Stomach (tissue), 19 donors: ENCODE measurements at regions of chr20 and their contacts with region 1.

Region 1: GRCh38 chr20:62302341-62303058 is at the start of gene ADRM1:
- DNase-seq: peak; percentile 97 to 99
- H3K4me3 ChIP-seq: peak within 1 kb of the TSS; percentile 78 to 92 (median 82)
- H3K27ac ChIP-seq: peak within 1 kb of the TSS; percentile 96 to 99 (median 97)
- H3K4me1 ChIP-seq: peaks cover 26 to 53% (median 40%) of the 10 kb centered on the region in 4 donors
- H3K27me3 ChIP-seq: no peaks in the 10 kb centered on the region
- CTCF ChIP-seq: peak in 6 of 7 experiments; percentile 82 to 98 (median 96)
- EP300 ChIP-seq: no peak
- POLR2A ChIP-seq: no peak
- total RNA-seq, gene ADRM1: 42.0 to 130 (median 68.4) TPM

Region 2: DNA sequence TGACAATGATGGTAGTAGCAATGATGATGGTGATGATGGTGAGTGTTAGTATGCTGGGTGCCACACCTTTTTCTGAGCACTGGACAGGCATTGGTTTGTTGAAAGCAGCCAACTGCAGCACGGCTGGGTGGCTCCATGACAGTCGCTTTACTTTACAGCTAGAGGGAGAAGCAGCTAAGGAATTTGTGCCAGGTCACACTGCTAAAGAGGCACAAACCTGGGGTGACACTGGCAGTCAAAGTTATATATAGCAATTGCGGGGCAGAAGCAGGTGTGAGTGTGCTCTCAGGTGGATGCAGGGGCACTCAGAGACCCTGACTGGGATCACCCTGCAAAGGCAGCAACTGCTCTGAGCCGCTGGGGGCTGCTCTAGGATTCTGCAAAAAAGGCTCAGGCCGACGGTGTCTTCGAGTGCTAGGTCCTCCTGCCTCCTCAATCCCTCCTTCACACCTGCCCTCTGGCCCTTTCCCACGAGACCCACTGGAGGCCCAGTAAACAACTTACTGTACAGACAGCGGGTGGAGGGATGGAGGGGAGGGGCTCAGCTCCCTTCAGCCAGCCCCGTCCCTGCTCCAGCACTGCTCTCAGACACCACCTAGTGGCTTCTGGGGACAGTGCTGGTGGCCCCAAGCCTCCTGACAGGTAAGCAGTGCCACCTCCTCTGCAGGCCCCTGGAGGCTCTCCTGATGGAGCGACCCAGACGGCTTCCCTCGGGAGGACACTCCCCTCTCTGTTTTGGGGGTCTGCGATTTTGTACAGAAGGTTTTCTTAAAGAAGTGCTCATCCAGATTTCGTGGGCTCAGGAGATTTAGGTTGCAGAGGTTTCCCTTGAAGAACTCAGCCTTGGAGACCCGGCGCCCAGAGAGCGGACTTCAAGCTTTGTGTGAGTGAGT is 80.1 kb after region 1 on chr20:
- intact Hi-C with region 1: loop called (anchors 5 kb)
- DNase-seq: peak; percentile 89 to 93
- H3K4me3 ChIP-seq: no peak overlapping the region
- H3K27ac ChIP-seq: peak overlapping the region in 3 of 5 donors; percentile 19 to 76 (median 20)
- H3K4me1 ChIP-seq: peaks cover 31 to 55% (median 43%) of the 10 kb centered on the region in 4 donors
- H3K27me3 ChIP-seq: no peaks in the 10 kb centered on the region
- CTCF ChIP-seq: peak in 5 of 7 experiments; percentile 84 to 94 (median 90)
- EP300 ChIP-seq: no peak
- POLR2A ChIP-seq: no peak

Region 3: GRCh38 chr20:62623488-62624324 is 321.2 kb after region 1 on chr20:
- intact Hi-C with region 1: no loop called
- DNase-seq: peak; percentile 96 to 99
- H3K4me3 ChIP-seq: peak overlapping the region in 2 of 4 donors; percentile 1 to 18
- H3K27ac ChIP-seq: peak overlapping the region; percentile 90 to 98 (median 94)
- H3K4me1 ChIP-seq: peaks cover 26 to 63% (median 48%) of the 10 kb centered on the region in 4 donors
- H3K27me3 ChIP-seq: peaks cover 0 to 4% (median 0%) of the 10 kb centered on the region in 3 donors
- CTCF ChIP-seq: peak in 1 of 7 experiments; percentile 9
- EP300 ChIP-seq: peak; percentile 53
- POLR2A ChIP-seq: peak in 1 of 4 donors; percentile 74